Activated naive CD4-positive, alpha-beta T cell treated with anti-CD3 and anti-CD28 coated beads for 36 hours (primary cell): ENCODE measurements at regions of chr5 and their contacts with region 1.

Region 1: DNA sequence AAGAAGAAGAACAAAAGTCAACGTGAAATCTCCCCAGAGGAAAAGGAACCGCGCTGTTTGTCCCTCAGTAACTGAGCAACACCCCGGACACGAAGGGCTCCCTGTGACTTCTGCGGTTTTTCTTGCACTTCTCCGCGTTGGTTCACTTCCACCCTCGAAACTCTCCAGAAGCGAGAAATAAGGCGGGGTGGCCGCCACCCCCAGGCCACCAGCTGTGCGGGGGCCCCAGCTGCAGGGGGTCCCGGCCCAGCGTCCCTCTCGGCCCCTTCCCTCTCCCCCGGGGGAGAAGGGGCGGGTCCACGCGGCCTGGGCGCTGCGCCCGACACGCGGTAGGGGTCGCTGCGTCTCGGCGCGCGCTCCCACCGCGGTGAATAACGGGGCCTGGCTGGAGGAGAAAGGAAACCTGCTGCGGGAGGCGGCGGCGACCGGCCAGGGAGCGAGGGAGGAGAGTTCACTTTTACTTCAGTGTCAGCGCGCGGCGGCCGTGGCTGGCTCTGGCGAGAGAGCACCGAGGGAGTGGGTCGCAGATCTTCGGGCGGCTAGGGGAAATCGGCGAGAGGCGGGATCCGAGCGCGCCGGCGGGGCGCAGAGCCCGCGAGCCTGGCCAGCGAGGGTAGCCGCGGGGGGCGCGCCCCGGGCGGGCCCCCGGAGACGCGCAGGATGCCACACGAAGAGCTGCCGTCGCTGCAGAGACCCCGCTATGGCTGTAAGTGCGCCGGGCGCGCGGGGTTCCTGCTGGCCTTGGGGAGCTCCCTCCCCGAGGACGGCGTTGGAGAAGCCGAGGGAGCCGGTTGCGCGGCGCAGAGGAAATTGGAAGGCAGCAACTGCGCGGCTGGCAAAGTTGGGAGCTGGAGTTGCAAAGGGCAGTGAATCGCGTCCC is at the start of gene IQGAP2:
- DNase-seq: peak; percentile 79
- H3K4me3 Mint-ChIP-seq: peak within 1 kb of the TSS; percentile 95
- H3K27ac Mint-ChIP-seq: peak within 1 kb of the TSS; percentile 98
- H3K4me1 Mint-ChIP-seq: peaks cover 44% of the 10 kb centered on the region
- H3K27me3 Mint-ChIP-seq: no peaks in the 10 kb centered on the region
- total RNA-seq, gene IQGAP2: 54.6 to 55.9 TPM

Region 2: DNA sequence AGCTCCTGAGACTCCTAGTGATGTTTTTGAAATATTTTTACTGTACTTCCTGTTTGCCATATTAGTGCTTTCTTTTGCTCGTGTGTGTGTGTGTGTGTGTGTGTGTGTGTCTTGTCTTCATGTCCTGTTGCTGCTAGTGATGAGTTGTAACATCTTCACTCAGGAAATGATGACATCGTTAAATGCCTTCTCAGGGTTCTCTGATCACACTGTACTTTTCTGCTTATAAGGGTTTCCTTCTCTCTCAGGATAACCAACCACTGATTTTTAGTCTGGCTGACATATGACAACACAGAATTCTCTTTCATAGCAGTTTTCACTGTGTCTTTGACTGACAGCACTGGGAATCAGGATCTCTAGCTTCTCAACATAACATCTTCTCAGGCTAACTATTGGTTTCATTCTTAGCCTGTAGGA is 303.8 kb before region 1 on chr5:
- CTCF ChIA-PET with region 1: no interaction called
- intact Hi-C with region 1: loop called (anchors 5 kb)
- DNase-seq: peak; percentile 69
- H3K4me3 Mint-ChIP-seq: peak overlapping the region; percentile 4
- H3K27ac Mint-ChIP-seq: no peak overlapping the region
- H3K4me1 Mint-ChIP-seq: peaks cover 9% of the 10 kb centered on the region
- H3K27me3 Mint-ChIP-seq: peaks cover 10% of the 10 kb centered on the region

Region 3: DNA sequence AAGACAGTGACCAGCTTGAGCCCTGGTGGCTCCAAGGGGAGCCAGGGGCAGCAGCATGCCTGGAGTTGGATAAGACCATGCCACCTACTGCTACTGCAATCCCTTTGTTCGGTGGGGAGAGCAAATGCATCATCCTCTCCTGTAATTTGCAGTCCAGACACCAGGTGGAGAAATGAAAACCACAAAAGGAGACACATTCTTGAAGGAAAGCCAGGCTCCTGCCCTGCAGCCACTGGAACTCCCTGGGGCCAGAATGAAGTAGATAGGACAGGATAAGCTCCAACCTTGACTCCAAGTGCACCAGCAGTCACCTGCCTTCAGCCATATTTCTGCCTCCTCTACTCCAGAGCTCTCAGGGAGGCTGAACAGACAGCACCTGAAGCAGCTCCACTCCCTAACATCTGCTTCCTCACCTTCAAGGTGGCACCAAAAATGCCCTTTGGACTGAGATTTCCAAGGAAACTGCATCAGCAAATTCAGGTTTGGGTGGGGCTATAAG is 65.1 kb before region 1 on chr5:
- CTCF ChIA-PET with region 1: interaction called, 5 read pairs
- intact Hi-C with region 1: loop called (anchors 2 kb)
- DNase-seq: peak; percentile 62
- H3K4me3 Mint-ChIP-seq: no peak overlapping the region
- H3K27ac Mint-ChIP-seq: no peak overlapping the region
- H3K4me1 Mint-ChIP-seq: peaks cover 18% of the 10 kb centered on the region
- H3K27me3 Mint-ChIP-seq: no peaks in the 10 kb centered on the region

Region 4: GRCh38 chr5:76473661-76474060 is 70.5 kb after region 1 on chr5:
- CTCF ChIA-PET with region 1: interaction called, 10 read pairs
- intact Hi-C with region 1: loop called (anchors 1 kb)
- DNase-seq: peak; percentile 90
- H3K4me3 Mint-ChIP-seq: peak overlapping the region; percentile 38
- H3K27ac Mint-ChIP-seq: peak overlapping the region; percentile 92
- H3K4me1 Mint-ChIP-seq: peaks cover 76% of the 10 kb centered on the region
- H3K27me3 Mint-ChIP-seq: no peaks in the 10 kb centered on the region

Region 5: DNA sequence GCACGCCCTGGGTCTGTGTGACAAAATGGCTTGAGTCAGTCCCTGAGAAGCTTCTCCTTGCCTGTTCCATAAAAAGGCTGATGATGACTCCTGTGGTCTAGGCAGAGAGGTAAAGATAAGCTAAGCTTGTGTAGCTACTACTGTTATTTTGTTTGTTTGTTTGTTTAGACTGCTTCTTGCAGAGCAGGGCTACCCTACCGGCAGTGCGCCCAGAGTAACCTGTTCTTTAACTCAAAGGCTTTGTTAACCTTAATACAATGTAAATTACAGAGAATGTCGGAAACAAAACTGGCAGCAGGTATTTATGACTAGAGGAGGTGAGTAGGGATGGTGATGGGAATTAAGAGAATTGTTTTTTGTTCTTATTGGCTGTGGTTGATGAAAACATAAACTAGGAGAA is 132.5 kb after region 1 on chr5:
- CTCF ChIA-PET with region 1: no interaction called
- intact Hi-C with region 1: no loop called
- DNase-seq: no peak
- H3K4me3 Mint-ChIP-seq: no peak overlapping the region
- H3K27ac Mint-ChIP-seq: no peak overlapping the region
- H3K4me1 Mint-ChIP-seq: peaks cover 42% of the 10 kb centered on the region
- H3K27me3 Mint-ChIP-seq: no peaks in the 10 kb centered on the region

Region 6: GRCh38 chr5:76641514-76642120 is 238.5 kb after region 1 on chr5:
- CTCF ChIA-PET with region 1: interaction called, 4 read pairs
- intact Hi-C with region 1: loop called (anchors 1 kb)
- DNase-seq: peak; percentile 87
- H3K4me3 Mint-ChIP-seq: no peak overlapping the region
- H3K27ac Mint-ChIP-seq: no peak overlapping the region
- H3K4me1 Mint-ChIP-seq: peaks cover 4% of the 10 kb centered on the region
- H3K27me3 Mint-ChIP-seq: no peaks in the 10 kb centered on the region

Region 7: DNA sequence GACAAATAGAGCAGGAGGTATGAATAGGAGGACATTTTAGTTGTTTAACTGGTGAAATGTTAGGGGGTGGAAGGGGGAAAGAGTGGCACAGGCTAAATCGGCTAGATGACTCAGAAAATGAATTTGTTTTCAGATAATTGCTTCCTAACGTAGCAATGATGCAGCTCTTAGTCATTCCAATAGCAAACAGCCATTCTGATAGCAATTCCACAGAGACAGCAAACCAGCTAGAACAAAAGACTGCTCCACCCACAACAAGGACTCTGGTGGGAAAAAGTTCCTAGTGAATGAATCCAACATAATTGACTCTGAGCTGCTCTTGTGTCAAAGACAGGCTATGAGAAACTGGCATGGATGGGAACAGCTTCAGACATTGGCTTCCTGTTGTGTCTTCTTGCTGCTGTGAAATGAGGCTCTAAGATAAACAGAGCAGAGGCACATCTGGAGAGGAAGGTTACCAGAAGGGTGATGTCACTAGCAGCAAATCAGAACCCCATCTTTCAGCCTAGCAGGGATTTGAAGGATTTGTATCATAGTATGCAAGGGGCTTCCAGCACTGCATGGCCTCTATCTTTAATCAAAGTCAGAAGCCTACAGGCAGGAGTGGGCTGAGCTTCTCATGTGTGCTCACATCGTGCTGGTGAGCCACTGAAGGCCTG is 387.6 kb after region 1 on chr5:
- CTCF ChIA-PET with region 1: no interaction called
- intact Hi-C with region 1: loop called (anchors 5 kb)
- DNase-seq: peak; percentile 49
- H3K4me3 Mint-ChIP-seq: no peak overlapping the region
- H3K27ac Mint-ChIP-seq: peak overlapping the region; percentile 70
- H3K4me1 Mint-ChIP-seq: peaks cover 18% of the 10 kb centered on the region
- H3K27me3 Mint-ChIP-seq: no peaks in the 10 kb centered on the region